Activated T-helper 2 cell treated with anti-CD3 and anti-CD28 coated beads, Interferon-gamma antibody, Interleukin-2, Interleukin-4, amounts not matched to agents 10 μg/mL and 5 μg/mL and 100 μg/mL, durations not matched to agents 14 hours and 24 hours and 36 hours (primary cell): ENCODE measurements at regions of chr1 and their contacts with region 1.

Region 1: GRCh38 chr1:198669023-198669698 is 30.3 kb downstream of the PTPRC start:
- DNase-seq: peak; percentile 56
- H3K4me3 Mint-ChIP-seq: peak overlapping the region; percentile 49
- H3K27ac Mint-ChIP-seq: peak overlapping the region; percentile 83
- H3K4me1 Mint-ChIP-seq: peaks cover 82% of the 10 kb centered on the region
- H3K27me3 Mint-ChIP-seq: no peaks in the 10 kb centered on the region

Region 2: DNA sequence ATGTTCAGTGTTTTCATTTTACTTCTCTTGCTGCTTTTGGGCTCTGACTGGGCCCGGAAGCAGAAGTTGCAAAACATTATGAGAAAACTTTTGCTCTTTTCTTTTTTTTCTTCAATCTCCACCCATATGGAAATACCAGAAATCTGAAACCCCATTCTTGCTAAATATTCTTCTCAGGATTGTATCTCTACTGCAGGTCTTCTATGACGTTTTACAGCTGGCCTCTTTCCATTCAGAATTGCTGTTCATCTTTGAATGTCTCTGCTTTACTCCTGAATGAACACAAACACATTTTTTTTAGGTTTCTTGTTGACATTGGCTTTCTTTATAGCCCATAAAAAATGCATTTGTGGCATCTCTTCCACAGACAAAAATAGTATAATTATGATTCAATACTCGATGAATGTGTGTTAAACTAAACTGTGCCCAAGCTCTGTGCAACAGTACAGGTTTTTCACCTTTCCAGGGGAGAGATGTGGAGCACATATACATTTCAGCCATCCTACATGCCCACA is 11.6 kb before region 1 on chr1:
- intact Hi-C with region 1: loop called (anchors 1 kb)
- DNase-seq: no peak
- H3K4me3 Mint-ChIP-seq: peak overlapping the region; percentile 78
- H3K27ac Mint-ChIP-seq: peak overlapping the region; percentile 95
- H3K4me1 Mint-ChIP-seq: peaks cover 55% of the 10 kb centered on the region
- H3K27me3 Mint-ChIP-seq: no peaks in the 10 kb centered on the region

Region 3: GRCh38 chr1:199265336-199265735 is 596.2 kb after region 1 on chr1:
- intact Hi-C with region 1: no loop called
- DNase-seq: no peak
- H3K4me3 Mint-ChIP-seq: no peak overlapping the region
- H3K27ac Mint-ChIP-seq: no peak overlapping the region
- H3K4me1 Mint-ChIP-seq: no peaks in the 10 kb centered on the region
- H3K27me3 Mint-ChIP-seq: peaks cover 19% of the 10 kb centered on the region

Region 4: GRCh38 chr1:199463521-199464128 is 794.5 kb after region 1 on chr1:
- intact Hi-C with region 1: no loop called
- DNase-seq: no peak
- H3K4me3 Mint-ChIP-seq: no peak overlapping the region
- H3K27ac Mint-ChIP-seq: no peak overlapping the region
- H3K4me1 Mint-ChIP-seq: no peaks in the 10 kb centered on the region
- H3K27me3 Mint-ChIP-seq: peaks cover 3% of the 10 kb centered on the region